ENCODE measurements at regions of chr15 and their contacts with region 1.

Region 1: DNA sequence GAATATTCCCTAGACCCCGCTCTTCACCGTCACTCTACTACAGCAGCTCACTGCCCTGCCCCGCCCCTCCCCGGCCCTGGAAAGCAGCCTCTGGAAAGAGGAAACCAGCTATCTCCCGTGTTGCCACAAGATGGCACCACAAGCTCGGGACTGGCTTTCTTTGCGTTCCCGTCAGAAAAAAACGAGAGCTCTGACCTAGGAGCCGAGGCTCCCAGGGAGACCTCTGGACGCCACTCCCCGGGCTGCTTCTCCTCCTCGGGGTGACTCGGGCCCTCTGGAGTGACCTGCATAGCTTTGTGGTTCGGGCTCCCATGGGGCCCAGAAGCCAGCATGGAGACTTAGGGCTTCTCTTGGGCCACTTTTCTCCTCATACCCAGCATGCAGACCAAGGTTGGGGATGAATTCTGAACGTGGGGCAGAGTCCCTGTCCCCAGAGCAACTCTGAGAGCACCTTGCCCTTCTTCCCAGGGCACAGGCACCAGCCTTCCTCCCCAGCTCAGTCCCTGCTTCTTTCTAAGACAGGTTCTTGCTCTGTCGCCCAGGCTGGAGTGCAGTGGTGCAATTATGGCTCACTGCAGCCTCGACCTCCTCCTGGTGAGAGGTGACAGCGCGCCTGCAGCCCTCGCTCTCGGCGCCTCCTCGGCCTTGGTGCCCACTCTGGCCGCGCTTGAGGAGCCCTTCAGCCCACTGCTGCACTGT is 19.0 kb downstream of the STOML1 start:
- DNase-seq: no peak
- H3K4me3 ChIP-seq: peak overlapping the region; percentile 18; the same call in 1 of the 2 replicates
- CTCF ChIP-seq: peak; percentile 91

Region 2: DNA sequence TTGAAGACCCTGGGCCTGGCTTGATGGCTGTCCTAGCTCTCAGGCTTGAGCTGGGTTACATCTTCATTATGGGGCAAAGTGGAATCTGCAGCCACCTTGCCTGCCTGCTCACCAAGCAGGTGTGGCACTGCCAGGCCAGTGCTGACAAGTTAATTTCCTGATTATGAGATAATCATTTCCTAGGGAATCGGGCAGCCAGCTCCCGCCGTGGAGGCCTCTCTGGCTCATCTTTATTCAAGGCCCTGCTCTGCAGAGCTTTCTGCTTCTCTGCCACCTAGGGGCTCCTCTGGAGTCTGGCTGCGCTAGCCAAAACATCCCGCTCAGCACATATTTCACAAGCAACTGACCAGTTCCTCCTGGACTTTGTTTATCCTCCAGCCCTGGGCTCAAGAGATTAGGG is 37.0 kb before region 1 on chr15:
- CTCF ChIA-PET with region 1: interaction called, 13 read pairs
- POLR2A ChIA-PET with region 1: no interaction called
- DNase-seq: no peak
- H3K4me3 ChIP-seq: no peak overlapping the region
- CTCF ChIP-seq: peak; percentile 14

Region 3: DNA sequence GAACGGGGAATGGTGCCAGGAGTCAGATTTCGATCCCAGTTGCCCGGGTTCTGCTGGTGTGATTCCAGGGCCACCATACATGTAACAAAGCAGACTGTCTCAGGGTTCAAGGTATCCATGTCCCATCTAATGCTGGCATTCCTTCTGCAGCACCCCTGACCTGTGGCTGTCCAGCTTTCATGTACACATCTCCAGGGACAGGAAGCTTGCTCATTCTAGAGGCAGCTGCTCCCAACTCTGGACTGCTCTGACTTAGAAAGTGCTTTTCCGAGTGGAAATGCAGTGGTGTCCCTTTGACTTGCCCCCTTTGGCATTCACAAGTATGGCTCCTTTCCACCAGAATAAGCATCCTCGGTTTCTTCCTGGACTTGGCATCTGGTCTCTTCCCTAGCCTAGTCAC is 52.3 kb after region 1 on chr15:
- CTCF ChIA-PET with region 1: interaction called, 14 read pairs
- POLR2A ChIA-PET with region 1: no interaction called
- DNase-seq: no peak
- H3K4me3 ChIP-seq: no peak overlapping the region
- CTCF ChIP-seq: no peak

Region 4: GRCh38 chr15:74134387-74135027 is 161.4 kb after region 1 on chr15:
- CTCF ChIA-PET with region 1: interaction called, 14 read pairs
- POLR2A ChIA-PET with region 1: no interaction called
- DNase-seq: no peak
- H3K4me3 ChIP-seq: no peak overlapping the region
- CTCF ChIP-seq: peak; percentile 68

Region 5: DNA sequence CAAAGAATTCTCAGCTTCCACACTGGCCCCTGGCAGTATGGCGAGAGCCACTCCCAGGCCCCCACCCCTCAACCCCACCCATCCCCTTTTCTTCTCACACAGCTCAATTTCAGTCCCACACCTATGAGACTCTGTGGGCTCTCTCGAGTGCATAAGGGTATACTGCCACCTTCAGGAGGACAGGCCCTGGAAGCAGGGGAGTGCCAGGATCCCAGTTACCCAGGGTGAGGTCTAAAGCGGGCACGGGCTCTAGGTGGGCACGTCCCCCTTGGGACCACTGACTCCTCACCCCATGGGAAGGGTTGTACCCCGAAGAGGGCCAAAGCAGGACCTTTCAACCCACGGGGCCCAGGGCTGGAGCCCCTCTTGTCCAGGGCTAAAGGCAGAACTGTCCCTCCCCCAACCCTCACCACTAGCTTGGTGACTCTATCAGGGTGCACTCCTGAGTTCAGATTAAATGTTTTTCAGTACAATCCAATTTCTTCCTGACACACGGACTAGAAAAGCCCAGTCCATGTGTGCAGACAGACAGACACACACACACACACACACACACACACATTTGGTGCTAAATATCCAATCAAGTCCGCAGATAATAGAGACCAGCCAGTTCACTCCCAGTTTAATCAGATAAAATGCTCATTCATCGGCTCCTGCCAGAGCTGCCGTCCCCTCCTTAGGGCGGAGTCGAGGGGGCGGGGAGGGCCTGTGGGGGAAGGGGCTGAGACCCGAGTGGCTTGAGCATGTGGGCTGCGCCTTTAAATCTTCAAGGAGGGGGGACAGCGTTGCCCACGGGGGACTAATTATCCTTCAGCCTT is 334.9 kb after region 1 on chr15:
- CTCF ChIA-PET with region 1: interaction called, 66 read pairs
- POLR2A ChIA-PET with region 1: no interaction called
- DNase-seq: no peak
- H3K4me3 ChIP-seq: no peak overlapping the region
- CTCF ChIP-seq: peak; percentile 88